ENCODE measurements at regions of chr5 and their contacts with region 1.

Region 1: GRCh38 chr5:103041071-103041676 is 78.8 kb downstream of the GIN1 start:
- DNase-seq: no peak

Region 2: DNA sequence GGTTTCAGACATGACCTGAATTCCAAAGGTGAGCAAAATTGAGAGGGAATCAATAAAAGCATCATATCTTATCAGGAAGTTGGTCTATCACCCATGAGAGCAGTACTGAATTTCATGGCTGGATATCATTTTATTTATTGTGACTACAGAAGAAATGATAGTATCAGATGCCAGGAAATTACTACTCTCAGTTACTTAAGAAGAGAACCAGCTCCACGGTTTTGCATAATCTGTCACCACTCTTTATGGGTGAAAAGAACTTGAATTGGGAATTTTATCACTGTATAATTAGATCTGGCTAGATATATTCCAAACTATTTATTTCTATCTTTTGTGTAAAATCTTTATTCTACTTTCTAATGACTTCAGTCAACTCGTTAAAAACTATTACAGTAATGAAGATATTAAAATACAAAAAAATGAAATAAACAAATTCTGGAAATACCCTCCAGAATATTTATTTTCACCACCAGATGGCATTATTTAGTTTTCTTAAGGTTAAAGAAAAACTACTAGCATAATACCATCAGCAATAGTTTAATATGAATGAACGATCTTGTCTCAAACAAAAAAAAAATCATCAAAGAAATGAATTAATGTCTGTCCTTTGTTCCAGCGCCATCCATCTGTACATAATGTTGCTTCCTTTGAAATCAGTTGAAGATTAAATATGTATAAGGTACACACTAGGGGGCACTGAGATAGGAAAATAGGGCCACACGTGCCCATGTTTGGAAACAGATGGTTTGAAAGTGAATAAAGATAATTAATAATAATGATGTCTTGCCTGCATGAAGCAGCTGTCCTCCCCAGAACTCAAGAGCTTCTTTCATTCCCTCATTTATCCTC is 457.7 kb before region 1 on chr5:
- intact Hi-C with region 1: loop called (anchors 10 kb)
- DNase-seq: no peak

Region 3: DNA sequence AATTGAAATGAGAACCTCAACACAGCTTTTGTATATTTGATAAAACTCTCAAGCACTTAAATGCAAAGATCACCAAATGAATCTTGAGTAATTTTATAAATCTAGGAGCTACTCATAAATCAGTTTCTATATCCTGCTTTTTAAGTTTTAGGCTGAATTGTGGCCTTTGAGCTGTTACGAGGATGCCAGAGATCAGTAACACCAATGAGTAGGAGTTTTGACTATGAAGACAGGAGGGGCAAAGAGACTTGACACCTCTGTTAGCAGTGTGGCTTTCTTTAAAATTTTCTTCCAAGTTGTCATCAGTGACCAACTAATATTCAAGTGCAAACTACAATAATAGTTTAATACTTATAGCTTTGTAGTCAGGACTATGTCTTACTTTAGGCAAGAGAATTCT is 91.5 kb after region 1 on chr5:
- intact Hi-C with region 1: no loop called
- DNase-seq: no peak